ENCODE measurements at regions of chr12 and their contacts with region 1.

Region 1: DNA sequence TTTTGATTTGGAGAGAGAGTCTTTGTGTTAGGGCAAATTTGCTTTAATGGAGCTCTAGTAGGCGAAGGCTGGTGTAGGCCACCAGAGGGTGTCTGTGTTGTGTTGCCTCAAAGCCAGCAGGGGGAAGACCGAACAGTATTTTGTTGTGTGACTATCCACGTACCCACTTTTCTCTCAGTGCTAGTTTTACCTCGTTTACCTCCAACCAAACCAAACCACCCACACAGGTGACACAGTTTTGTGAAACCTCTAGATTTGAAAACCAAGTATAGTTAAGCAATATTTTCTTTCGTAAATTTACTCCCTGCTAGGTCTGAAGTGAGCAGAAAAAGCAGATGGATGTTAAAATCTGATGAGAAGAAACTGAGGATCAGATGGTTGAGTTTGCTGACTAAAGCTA is 36.3 kb upstream of the NPFF start:
- DNase-seq: peak; percentile 46
- ATAC-seq: peak; percentile 96
- H3K4me3 Mint-ChIP-seq: no peak overlapping the region
- H3K27ac Mint-ChIP-seq: peak overlapping the region; percentile 46
- H3K4me1 Mint-ChIP-seq: peaks cover 8% of the 10 kb centered on the region
- H3K27me3 Mint-ChIP-seq: no peaks in the 10 kb centered on the region
- CTCF ChIP-seq: peak; percentile 22; the same call in 1 of the 2 replicates

Region 2: GRCh38 chr12:53568809-53569557 is 25.4 kb after region 1 on chr12:
- CTCF ChIA-PET with region 1: interaction called, 15 read pairs
- POLR2A ChIA-PET with region 1: no interaction called
- DNase-seq: no peak
- ATAC-seq: peak; percentile 77
- H3K4me3 Mint-ChIP-seq: no peak overlapping the region
- H3K27ac Mint-ChIP-seq: peak overlapping the region; percentile 47
- H3K4me1 Mint-ChIP-seq: peaks cover 38% of the 10 kb centered on the region
- H3K27me3 Mint-ChIP-seq: no peaks in the 10 kb centered on the region
- CTCF ChIP-seq: no peak

Region 3: GRCh38 chr12:53618275-53618674 is 74.7 kb after region 1 on chr12:
- CTCF ChIA-PET with region 1: interaction called, 13 read pairs
- POLR2A ChIA-PET with region 1: interaction called, 5 read pairs
- DNase-seq: no peak
- ATAC-seq: no peak
- H3K4me3 Mint-ChIP-seq: no peak overlapping the region
- H3K27ac Mint-ChIP-seq: peak overlapping the region; percentile 46; the same call in 1 of the 2 replicates
- H3K4me1 Mint-ChIP-seq: peaks cover 10% of the 10 kb centered on the region
- H3K27me3 Mint-ChIP-seq: no peaks in the 10 kb centered on the region
- CTCF ChIP-seq: no peak

Region 4: GRCh38 chr12:53659011-53659551 is 115.5 kb after region 1 on chr12:
- CTCF ChIA-PET with region 1: interaction called, 24 read pairs
- POLR2A ChIA-PET with region 1: no interaction called
- DNase-seq: no peak
- ATAC-seq: peak; percentile 92
- H3K4me3 Mint-ChIP-seq: no peak overlapping the region
- H3K27ac Mint-ChIP-seq: peak overlapping the region; percentile 96
- H3K4me1 Mint-ChIP-seq: peaks cover 14% of the 10 kb centered on the region
- H3K27me3 Mint-ChIP-seq: no peaks in the 10 kb centered on the region
- CTCF ChIP-seq: no peak

Region 5: DNA sequence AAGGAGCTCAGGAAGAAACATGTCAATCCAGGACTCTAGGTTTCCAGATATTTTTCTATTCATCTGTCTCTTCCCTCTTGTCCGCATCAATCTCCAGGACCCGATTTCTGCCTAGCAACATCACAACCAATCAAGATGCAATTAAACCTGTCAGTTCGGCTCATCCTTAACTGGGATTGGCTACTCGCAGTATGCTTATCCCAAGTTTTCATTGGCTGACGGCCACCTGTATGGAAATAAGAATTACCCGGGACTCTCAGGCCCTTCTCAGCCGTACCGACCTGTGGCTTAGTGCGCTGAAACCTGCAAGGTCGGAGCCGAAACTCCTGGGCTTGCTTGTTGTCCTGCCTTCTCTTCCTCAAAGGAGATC is 152.7 kb after region 1 on chr12:
- CTCF ChIA-PET with region 1: interaction called, 12 read pairs
- POLR2A ChIA-PET with region 1: no interaction called
- DNase-seq: peak; percentile 74
- ATAC-seq: peak; percentile 94
- H3K4me3 Mint-ChIP-seq: peak overlapping the region; percentile 78
- H3K27ac Mint-ChIP-seq: peak overlapping the region; percentile 100
- H3K4me1 Mint-ChIP-seq: peaks cover 35% of the 10 kb centered on the region
- H3K27me3 Mint-ChIP-seq: peaks cover 59% of the 10 kb centered on the region
- CTCF ChIP-seq: no peak

Region 6: DNA sequence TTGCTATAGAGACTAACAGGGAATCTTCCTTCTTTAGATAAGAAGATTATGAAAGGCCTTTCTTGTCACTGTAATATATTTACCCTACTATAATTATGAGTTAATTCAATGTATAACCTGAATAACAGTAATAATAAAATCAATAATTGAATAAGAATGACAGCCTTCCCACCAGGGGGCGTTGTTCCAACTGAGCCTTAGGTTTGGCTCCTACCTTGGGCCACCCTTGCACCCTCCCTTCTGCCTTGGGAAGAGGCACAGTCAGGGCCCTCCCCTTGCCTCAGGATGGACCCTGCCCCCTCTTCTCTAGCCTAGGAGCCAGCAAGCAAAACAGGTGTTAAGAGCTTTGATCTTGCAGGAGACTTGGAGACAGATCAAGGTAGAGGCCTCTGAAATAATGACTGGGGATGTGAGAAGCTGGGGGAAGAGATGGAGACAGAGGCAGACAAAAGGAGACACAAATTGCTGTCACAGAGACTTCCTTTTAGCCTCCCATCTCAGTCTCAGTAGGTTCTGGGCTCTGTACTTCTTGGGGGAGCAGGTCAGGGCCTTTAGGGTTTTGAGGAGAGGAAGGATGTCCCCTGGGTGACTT is 248.3 kb after region 1 on chr12:
- CTCF ChIA-PET with region 1: no interaction called
- POLR2A ChIA-PET with region 1: no interaction called
- DNase-seq: peak; percentile 62
- ATAC-seq: peak; percentile 94
- H3K4me3 Mint-ChIP-seq: no peak overlapping the region
- H3K27ac Mint-ChIP-seq: no peak overlapping the region
- H3K4me1 Mint-ChIP-seq: peaks cover 11% of the 10 kb centered on the region; the same call in 1 of the 2 replicates
- H3K27me3 Mint-ChIP-seq: peaks cover 4% of the 10 kb centered on the region; the same call in 1 of the 2 replicates
- CTCF ChIP-seq: peak; percentile 69; the same call in 1 of the 2 replicates

Region 7: GRCh38 chr12:54294152-54294952 is 750.8 kb after region 1 on chr12:
- CTCF ChIA-PET with region 1: no interaction called
- POLR2A ChIA-PET with region 1: no interaction called
- DNase-seq: peak; percentile 88
- ATAC-seq: peak; percentile 76
- H3K4me3 Mint-ChIP-seq: no peak overlapping the region
- H3K27ac Mint-ChIP-seq: no peak overlapping the region
- H3K4me1 Mint-ChIP-seq: peaks cover 4% of the 10 kb centered on the region
- H3K27me3 Mint-ChIP-seq: peaks cover 4% of the 10 kb centered on the region
- CTCF ChIP-seq: peak; percentile 77

Measured in WTC11 (cell line).